IMR-90 (cell line): ENCODE measurements at regions of chr1 and their contacts with region 1.

Region 1: GRCh38 chr1:93661829-93662474 is 19.7 kb downstream of the BCAR3 start:
- DNase-seq: peak; percentile 89
- ATAC-seq: peak; percentile 69
- H3K4me3 ChIP-seq: no peak overlapping the region
- H3K27ac ChIP-seq: peak overlapping the region; percentile 83; the same call in 1 of the 2 replicates
- H3K4me1 ChIP-seq: peaks cover 50% of the 10 kb centered on the region
- H3K27me3 ChIP-seq: no peaks in the 10 kb centered on the region
- CTCF ChIP-seq: no peak
- POLR2A ChIP-seq: no peak
- RAD21 ChIP-seq: no peak; the same call in 1 of the 2 replicates

Region 2: DNA sequence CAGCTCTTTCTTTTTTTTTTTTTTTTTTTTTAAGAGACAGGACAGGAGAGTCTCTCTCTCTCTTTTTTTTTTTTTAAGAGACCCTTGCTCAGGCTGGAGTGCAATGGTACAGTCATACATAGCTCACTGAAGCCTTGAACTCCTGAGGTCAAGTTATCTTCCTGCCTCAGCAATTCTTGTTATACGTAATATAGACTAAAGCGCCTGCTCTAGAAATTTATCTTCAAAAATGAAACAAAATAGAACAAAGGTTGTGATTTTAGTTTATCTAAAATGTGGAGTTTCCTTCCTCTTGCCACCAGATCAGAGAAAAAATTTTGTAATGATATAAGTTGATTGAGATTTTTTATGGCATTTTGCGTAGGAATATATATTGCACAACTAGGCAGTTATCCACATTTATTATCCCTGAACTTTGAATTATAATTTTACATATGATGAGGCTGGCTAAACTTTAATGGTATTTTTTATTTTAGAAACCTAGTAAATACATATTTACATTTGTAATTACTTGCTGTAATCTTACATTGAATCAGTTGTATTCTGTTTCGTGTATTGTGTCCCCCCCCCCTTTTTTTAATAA is 538.7 kb before region 1 on chr1:
- CTCF ChIA-PET with region 1: no interaction called
- POLR2A ChIA-PET with region 1: no interaction called
- dilution Hi-C with region 1: no loop called
- in situ Hi-C with region 1: no loop called
- intact Hi-C with region 1: no loop called
- DNase-seq: peak; percentile 50
- ATAC-seq: no peak
- H3K4me3 ChIP-seq: no peak overlapping the region
- H3K27ac ChIP-seq: no peak overlapping the region
- H3K4me1 ChIP-seq: no peaks in the 10 kb centered on the region
- H3K27me3 ChIP-seq: no peaks in the 10 kb centered on the region
- CTCF ChIP-seq: no peak
- POLR2A ChIP-seq: no peak
- RAD21 ChIP-seq: no peak

Region 3: DNA sequence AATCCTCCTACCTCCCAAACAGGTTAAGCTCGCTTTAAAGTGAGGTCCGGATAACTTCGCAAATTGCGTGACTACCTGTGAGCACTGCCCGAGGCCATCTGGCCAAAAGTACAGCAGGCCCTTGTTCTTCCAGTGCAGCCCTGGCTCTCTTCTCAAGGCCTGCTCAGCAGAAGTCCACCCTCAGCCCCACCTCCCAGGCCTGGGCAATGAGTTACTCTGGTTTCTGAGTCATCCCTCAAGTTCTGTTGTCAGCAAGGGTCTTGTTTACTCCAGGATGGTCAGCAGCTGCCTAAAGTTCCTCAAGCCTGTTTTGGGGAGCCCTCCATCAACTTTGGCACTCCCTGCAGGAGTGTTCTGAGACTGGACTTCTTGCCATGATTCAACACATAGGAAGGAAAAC is 82.1 kb before region 1 on chr1:
- CTCF ChIA-PET with region 1: no interaction called
- POLR2A ChIA-PET with region 1: interaction called, 14 read pairs
- dilution Hi-C with region 1: no loop called
- in situ Hi-C with region 1: no loop called
- intact Hi-C with region 1: no loop called
- DNase-seq: peak; percentile 97
- ATAC-seq: peak; percentile 97
- H3K4me3 ChIP-seq: no peak overlapping the region
- H3K27ac ChIP-seq: peak overlapping the region; percentile 72
- H3K4me1 ChIP-seq: peaks cover 14% of the 10 kb centered on the region
- H3K27me3 ChIP-seq: no peaks in the 10 kb centered on the region
- CTCF ChIP-seq: no peak
- POLR2A ChIP-seq: no peak
- RAD21 ChIP-seq: peak; percentile 26; the same call in 1 of the 2 replicates

Region 4: DNA sequence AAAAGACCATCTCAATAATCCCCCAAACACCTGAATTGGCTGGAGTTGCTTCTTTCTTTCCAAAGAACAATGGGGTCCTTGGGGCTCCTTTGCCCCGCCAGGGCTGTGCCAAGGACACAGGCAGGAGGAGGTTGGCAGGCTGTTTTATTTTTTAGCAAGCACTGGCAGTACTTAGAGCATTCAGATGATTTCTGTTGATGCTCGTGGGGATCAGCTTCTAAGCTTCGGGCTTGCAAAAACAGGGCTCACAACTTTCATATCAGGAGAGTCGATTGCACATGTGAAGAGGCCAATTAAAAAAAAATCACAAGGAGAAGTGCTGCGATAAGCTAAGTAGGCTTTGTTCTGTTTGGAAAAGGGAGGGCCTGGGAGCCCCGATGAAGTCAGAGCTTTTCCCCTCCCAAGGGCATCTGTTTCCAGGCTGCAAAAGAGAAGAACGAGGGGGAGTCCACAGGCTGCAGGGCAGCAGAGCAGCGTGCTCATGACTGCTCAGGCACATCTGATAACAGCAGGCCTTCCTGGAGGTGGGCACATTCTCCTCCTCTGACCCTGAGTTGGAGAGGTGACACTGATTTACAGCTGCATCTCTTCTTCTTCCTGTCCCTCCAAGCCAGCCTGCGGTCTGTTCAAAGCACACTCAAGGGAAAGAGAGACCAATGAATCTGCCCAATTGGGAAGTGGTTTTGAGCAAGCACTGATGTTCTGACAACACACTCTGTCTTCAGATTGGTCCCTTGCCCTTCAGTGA is 47.0 kb after region 1 on chr1:
- CTCF ChIA-PET with region 1: no interaction called
- POLR2A ChIA-PET with region 1: no interaction called
- dilution Hi-C with region 1: no loop called
- in situ Hi-C with region 1: no loop called
- intact Hi-C with region 1: no loop called
- DNase-seq: peak; percentile 33
- ATAC-seq: peak; percentile 63
- H3K4me3 ChIP-seq: no peak overlapping the region
- H3K27ac ChIP-seq: no peak overlapping the region
- H3K4me1 ChIP-seq: peaks cover 6% of the 10 kb centered on the region
- H3K27me3 ChIP-seq: no peaks in the 10 kb centered on the region
- CTCF ChIP-seq: no peak
- POLR2A ChIP-seq: no peak
- RAD21 ChIP-seq: no peak